Thyroid gland (tissue), 4 donors: ENCODE measurements at regions of chr20 and their contacts with region 1.

Region 1: GRCh38 chr20:50146732-50147662 is 6.5 kb downstream of the PEDS1 start:
- DNase-seq: peak in 1 of 2 donors; percentile 20
- H3K4me3 ChIP-seq: no peak overlapping the region
- H3K27ac ChIP-seq: peak overlapping the region; percentile 20 to 70 (median 52)
- H3K4me1 ChIP-seq: peaks cover 27 to 69% of the 10 kb centered on the region in 2 donors
- H3K27me3 ChIP-seq: no peaks in the 10 kb centered on the region
- CTCF ChIP-seq: no peak
- POLR2A ChIP-seq: no peak

Region 2: GRCh38 chr20:50085452-50086365 is 61.3 kb before region 1 on chr20:
- intact Hi-C with region 1: loop called (anchors 10 kb)
- DNase-seq: peak; percentile 46 to 54
- H3K4me3 ChIP-seq: peak overlapping the region in 1 of 3 donors; percentile 11
- H3K27ac ChIP-seq: peak overlapping the region; percentile 29 to 71 (median 36)
- H3K4me1 ChIP-seq: peaks cover 23 to 27% of the 10 kb centered on the region in 2 donors
- H3K27me3 ChIP-seq: no peaks in the 10 kb centered on the region
- CTCF ChIP-seq: peak; percentile 57 to 83 (median 79)
- POLR2A ChIP-seq: no peak